Transverse colon (tissue), 4 donors: ENCODE measurements at regions of chr11 and their contacts with region 1.

Region 1: GRCh38 chr11:105857728-105858127 is 164.3 kb downstream of the MSANTD4 start:
- DNase-seq: no peak
- H3K4me3 ChIP-seq: no peak overlapping the region
- H3K27ac ChIP-seq: no peak overlapping the region
- H3K4me1 ChIP-seq: no peaks in the 10 kb centered on the region
- H3K27me3 ChIP-seq: no peaks in the 10 kb centered on the region
- CTCF ChIP-seq: no peak
- EP300 ChIP-seq: no peak
- POLR2A ChIP-seq: no peak

Region 2: DNA sequence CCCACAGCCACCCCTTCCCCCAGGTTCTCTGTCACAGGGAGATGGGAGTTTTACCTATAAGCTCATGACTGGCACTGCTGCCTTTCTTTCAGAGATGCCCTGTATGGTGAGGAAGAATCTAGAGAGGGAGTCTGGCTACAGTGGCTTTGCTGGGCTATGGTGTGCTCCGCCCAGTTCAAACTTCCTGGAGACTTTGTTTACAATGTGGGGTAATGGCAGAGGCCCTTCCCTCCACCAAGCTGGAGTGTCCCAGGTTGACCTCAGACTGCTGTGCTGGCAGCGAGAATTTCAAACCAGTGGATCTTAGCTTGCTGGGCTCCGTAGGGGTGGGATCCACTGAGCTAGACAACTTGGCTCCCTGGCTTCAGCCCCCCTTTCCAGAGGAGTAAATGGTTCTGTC is 20.8 kb after region 1 on chr11:
- in situ Hi-C with region 1: no loop called
- intact Hi-C with region 1: loop called (anchors 2 kb)
- DNase-seq: no peak
- H3K4me3 ChIP-seq: no peak overlapping the region
- H3K27ac ChIP-seq: no peak overlapping the region
- H3K4me1 ChIP-seq: no peaks in the 10 kb centered on the region
- H3K27me3 ChIP-seq: no peaks in the 10 kb centered on the region
- CTCF ChIP-seq: no peak
- EP300 ChIP-seq: no peak
- POLR2A ChIP-seq: no peak

Region 3: DNA sequence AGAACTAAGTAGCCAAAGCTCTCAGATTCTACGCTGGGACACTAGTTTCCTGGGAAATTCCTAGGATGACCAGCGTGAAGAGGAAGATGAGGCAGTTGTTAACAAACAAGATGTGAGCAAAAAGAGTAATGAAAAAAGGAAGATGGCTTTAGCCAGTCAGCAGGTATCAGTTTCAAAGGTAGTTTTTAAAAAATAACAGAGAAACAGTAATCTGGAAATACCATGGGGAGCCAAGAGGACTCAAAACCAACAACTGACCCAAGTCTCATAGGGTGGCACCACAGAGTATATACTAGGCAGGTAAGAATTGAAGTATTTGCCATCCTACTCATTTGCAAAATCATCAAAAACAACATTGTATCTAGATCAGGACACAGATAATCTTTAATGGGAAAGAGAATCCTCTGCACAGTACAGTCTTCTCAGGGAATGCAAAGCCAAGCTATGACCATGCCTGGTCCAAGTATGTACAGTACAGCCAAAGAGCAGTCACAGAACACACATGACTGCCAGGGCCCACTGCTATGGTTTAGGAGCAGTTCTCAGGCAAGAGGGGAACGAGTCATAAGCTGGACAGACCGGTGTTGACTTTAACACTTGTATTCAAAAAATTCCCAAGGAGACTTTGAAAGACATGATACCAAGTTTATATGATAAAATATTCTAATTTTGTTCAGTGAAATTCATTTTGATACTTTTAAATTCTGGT is 143.7 kb after region 1 on chr11:
- in situ Hi-C with region 1: no loop called
- intact Hi-C with region 1: no loop called
- DNase-seq: no peak
- H3K4me3 ChIP-seq: no peak overlapping the region
- H3K27ac ChIP-seq: no peak overlapping the region
- H3K4me1 ChIP-seq: peaks cover 0 to 3% (median 0%) of the 10 kb centered on the region in 4 donors
- H3K27me3 ChIP-seq: no peaks in the 10 kb centered on the region
- CTCF ChIP-seq: no peak
- EP300 ChIP-seq: no peak
- POLR2A ChIP-seq: no peak

Region 4: DNA sequence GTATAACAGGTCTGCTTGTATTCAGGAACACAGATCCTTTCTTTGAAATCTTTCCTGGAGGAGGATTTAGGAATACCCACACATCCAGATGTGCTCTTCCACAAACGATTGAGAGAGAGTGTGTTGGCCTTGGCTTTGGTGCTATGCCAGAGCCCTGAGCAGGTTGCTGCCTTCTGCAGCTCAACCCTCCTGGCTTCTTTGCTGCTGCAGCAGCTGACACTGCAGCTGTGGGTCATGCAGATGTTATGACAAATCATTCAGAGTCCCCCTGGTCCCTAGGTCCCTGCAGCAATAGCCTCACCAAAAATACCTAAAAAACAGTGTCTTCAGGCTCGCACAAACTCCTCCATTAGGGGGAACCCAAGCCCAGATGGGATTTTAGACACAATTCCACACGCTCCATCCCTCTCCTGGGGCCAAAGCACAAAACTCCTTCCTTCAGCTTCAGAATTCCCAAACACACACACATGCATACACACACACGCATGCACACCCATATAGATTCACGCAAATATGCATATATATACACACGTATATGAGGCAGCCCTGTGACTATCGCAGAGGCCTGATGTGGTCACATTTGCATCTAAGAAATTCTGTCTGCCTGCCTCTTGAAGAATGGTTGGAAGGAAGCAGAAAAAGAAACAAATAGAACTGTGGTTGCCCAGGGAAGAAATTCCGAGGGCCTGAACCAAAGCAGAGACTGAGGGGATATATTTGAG is 1818.8 kb after region 1 on chr11:
- in situ Hi-C with region 1: no loop called
- intact Hi-C with region 1: no loop called
- DNase-seq: no peak
- H3K4me3 ChIP-seq: no peak overlapping the region
- H3K27ac ChIP-seq: no peak overlapping the region
- H3K4me1 ChIP-seq: no peaks in the 10 kb centered on the region
- H3K27me3 ChIP-seq: no peaks in the 10 kb centered on the region
- CTCF ChIP-seq: no peak
- EP300 ChIP-seq: no peak
- POLR2A ChIP-seq: no peak